Aorta (tissue), 5 donors: ENCODE measurements at regions of chr20 and their contacts with region 1.

Region 1: DNA sequence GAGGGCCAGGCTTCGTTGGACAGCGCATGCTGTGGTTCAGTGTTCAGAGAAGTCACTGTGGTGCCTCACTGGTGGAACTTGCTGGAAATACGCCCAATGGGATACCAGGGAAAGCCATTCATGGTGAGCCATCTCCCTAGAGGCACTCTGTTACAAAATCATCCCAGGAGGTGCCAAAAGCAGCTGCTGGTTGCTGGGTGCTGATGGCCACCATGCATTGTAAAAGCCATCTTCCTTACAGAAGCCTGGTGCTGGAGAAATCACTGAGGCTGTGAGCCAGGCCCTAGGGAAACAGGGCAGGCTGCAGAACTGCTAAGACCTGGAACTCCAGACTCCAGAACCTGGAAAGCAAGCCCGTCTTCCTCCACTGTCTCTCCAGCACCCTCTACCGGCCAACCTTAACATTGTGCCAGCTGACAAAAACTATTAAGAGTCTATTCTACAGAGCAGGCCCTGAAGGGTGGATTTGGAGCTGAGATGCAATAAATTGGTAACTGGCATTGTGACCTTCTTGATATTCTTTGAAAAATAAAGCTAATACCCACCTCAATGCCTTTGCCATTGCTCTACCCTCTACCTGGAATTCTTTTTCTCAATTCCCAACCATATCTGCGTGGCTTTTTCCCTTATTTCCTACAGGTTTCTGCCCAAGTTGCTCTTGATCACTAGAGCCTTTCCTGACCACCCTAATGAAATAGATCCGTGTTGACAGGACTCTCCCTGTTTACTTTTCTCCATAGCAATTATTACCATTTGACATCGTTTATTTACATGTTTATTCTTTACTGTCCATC is 18.5 kb downstream of the SNRPB start:
- DNase-seq: peak; percentile 77 to 83
- ATAC-seq: peak; percentile 79
- H3K4me3 ChIP-seq: no peak overlapping the region
- H3K27ac ChIP-seq: no peak overlapping the region
- H3K4me1 ChIP-seq: no peaks in the 10 kb centered on the region
- H3K27me3 ChIP-seq: no peaks in the 10 kb centered on the region

Region 2: DNA sequence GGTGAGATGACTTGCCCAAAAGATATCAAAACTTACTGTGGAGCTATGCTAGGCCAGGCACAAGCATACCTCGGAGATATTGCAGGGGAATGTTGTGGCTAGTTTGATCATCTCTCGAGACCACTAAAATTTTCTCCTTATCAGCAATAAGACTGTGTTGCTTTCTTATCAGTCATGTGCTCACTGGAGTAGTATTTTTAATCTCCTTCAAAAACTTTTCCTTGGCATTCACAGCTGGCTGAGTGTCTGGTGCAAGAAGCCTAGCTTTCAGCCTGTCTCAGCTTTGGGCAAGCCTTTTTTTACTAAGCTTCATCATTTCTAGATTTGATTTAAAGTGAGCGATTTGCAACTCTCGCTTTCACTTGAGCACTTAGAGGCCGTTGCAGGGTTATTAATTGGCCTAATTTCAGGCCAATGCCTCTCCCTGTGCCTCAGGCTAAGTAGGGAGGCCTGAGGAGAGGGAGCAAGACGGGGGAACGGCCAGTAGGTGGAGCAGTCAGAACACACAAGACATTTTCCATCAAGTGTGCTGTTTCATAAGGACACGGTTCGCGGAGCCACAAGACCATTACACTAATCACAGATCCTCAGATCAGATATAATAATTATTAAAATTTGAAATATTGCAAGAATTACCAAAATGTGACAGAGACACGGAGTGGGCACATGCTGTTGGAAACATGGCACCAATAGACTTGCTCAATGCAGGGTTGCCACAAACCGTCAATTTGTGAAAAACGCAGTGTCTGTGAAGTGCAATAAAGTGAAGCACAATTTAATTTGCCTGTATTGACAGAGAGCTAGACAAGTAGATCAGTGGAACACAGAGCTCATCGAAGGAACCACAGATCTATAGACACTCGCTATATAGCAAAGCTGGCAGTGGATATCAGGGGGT is 687.8 kb before region 1 on chr20:
- intact Hi-C with region 1: loop called in 1 of 2 experiments (anchors 10 kb)
- DNase-seq: peak; percentile 86 to 88
- ATAC-seq: peak; percentile 85
- H3K4me3 ChIP-seq: no peak overlapping the region
- H3K27ac ChIP-seq: no peak overlapping the region
- H3K4me1 ChIP-seq: no peaks in the 10 kb centered on the region
- H3K27me3 ChIP-seq: no peaks in the 10 kb centered on the region

Region 3: GRCh38 chr20:1776681-1777475 is 675.3 kb before region 1 on chr20:
- intact Hi-C with region 1: loop called in 1 of 2 experiments (anchors 10 kb)
- DNase-seq: peak; percentile 91 to 96
- ATAC-seq: peak; percentile 97
- H3K4me3 ChIP-seq: peak overlapping the region; percentile 51 to 67
- H3K27ac ChIP-seq: no peak overlapping the region
- H3K4me1 ChIP-seq: no peaks in the 10 kb centered on the region
- H3K27me3 ChIP-seq: no peaks in the 10 kb centered on the region

Region 4: DNA sequence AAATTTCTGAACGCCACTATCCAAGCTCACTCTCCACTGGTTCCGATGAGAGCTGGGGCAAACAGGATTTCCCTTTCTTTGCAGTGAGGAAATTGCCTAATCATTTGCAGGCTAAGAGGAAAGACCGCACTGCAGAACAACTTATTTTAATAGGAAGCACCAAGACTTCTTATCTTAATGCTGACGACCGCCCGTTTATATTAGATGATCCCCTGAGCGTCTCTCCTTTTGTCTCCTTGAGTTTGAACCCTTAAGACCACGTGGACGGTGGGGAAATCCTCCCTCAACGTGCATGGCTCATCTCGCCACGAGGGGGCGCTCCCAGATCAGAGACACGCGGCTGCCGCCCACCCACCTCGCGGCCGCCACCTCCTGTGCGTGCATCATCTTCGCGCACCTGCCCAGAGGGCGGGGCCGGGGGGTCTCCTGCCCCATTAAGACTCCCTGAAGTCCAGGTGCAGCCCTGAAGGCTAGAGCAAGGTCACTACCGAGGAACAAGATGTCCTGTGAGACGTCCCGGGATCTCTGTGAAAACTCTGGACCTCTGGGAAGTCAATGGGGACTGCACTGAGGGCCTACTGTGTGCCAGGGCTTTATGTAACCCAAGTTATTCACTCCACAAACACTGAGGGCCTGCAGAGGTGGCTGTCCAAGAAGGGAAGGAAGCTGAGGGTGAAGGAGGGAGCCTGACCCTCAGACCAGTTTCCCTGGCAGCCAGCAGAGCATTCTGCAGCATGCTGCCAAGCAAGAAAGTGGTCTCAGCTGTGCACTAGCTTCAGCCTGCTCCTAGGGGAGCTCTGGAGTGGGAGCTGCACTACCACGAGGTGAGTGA is 486.4 kb before region 1 on chr20:
- intact Hi-C with region 1: loop called (anchors 5 to 10 kb)
- DNase-seq: peak; percentile 77 to 94
- ATAC-seq: peak; percentile 84
- H3K4me3 ChIP-seq: no peak overlapping the region
- H3K27ac ChIP-seq: no peak overlapping the region
- H3K4me1 ChIP-seq: no peaks in the 10 kb centered on the region
- H3K27me3 ChIP-seq: no peaks in the 10 kb centered on the region

Region 5: GRCh38 chr20:1979106-1979779 is 472.9 kb before region 1 on chr20:
- intact Hi-C with region 1: loop called in 1 of 2 experiments (anchors 10 kb)
- DNase-seq: no peak
- ATAC-seq: no peak
- H3K4me3 ChIP-seq: no peak overlapping the region
- H3K27ac ChIP-seq: no peak overlapping the region
- H3K4me1 ChIP-seq: no peaks in the 10 kb centered on the region
- H3K27me3 ChIP-seq: peaks cover 0 to 2% of the 10 kb centered on the region in 2 donors

Region 6: DNA sequence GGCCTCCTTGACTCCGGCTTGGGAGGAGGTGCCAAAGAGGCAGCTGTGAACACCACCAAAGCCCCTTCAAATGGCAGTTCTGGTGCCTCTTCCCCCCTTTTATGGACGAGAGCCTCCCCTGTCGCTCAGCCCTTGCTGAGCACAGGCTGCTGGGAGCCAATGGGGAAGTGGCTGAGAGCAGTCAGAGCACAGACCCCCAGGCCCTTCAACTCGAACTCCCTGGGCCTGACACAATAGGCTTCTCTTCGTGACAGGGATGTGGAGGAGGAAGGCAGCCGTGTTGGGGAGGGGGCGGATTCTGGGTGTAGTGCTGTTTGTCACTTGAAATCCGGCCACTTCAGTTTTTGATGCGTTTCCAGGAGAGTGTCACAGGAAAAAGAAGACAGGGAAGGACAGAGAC is 458.1 kb before region 1 on chr20 and contains the start of gene PDYN:
- intact Hi-C with region 1: no loop called
- DNase-seq: no peak
- ATAC-seq: no peak
- H3K4me3 ChIP-seq: no peak within 1 kb of the TSS
- H3K27ac ChIP-seq: no peak within 1 kb of the TSS
- H3K4me1 ChIP-seq: no peaks in the 10 kb centered on the region
- H3K27me3 ChIP-seq: no peaks in the 10 kb centered on the region
- total RNA-seq, gene PDYN: not detected

Region 7: DNA sequence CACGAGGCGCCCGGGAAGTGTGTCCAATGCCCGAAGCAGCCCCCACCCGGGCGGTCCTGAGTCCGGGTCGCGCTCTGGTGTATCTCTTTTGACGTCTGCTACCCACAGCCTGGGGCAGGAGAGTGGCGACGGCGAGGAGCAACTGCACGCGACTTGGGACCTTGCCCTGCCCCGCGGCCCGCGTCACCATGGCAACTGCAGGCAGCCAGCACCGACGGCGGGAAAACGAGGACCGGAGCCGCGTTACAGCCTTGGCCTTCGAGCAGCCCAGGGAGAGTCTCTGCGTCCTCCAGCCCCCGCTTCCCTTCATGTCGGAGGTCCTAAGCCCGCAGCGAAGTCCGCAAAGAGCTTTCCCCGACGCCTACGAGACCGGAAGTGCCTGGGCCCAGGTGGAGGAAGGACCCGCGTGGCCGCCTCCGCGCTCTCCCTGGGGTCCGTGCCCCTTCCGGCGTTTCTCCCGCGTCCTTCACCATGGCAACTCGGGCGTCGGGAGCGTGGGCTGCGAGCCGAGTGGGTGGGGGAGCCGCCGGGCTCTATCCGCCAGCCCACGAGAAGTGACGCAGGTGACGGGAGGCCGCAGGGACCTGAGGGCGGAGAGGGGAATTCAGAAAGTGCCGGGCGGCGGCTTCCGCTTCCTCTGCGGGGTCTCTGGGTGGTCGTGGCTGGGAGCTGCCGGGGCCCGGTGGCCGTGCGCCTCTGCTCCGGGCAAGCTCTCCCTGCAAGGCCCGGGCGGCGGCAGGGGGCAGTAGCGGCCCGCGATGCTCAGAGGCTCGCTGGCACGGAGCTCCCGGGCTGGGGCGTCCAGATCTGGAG is 245.0 kb before region 1 on chr20:
- intact Hi-C with region 1: loop called (anchors 10 kb)
- DNase-seq: peak; percentile 85 to 92
- ATAC-seq: peak; percentile 89
- H3K4me3 ChIP-seq: peak overlapping the region in 1 of 2 donors; percentile 6
- H3K27ac ChIP-seq: no peak overlapping the region
- H3K4me1 ChIP-seq: no peaks in the 10 kb centered on the region
- H3K27me3 ChIP-seq: no peaks in the 10 kb centered on the region

Region 8: DNA sequence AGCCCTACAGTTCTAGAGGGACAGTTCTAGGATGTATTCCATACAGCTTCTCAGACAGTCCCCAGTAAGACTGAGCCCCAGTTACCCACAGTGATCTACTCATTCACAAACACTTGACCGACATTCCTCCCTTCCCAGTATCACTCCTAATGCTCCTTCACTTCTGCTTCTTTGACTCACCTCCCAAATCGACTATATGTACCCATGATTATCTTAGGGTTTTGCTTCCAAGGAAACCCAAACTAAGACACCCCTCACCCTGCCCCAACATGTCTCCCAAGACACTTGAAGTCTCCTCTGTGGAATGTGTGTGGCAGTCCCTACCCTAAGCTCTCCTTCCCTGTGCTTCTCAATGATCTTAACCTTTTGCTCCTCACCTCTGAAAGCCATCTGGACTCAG is 95.0 kb before region 1 on chr20:
- intact Hi-C with region 1: loop called in 1 of 2 experiments (anchors 5 kb)
- DNase-seq: no peak
- ATAC-seq: no peak
- H3K4me3 ChIP-seq: no peak overlapping the region
- H3K27ac ChIP-seq: no peak overlapping the region
- H3K4me1 ChIP-seq: no peaks in the 10 kb centered on the region
- H3K27me3 ChIP-seq: no peaks in the 10 kb centered on the region